Posterior vena cava (tissue), 2 donors: ENCODE measurements at regions of chr13 and their contacts with region 1.

Region 1: DNA sequence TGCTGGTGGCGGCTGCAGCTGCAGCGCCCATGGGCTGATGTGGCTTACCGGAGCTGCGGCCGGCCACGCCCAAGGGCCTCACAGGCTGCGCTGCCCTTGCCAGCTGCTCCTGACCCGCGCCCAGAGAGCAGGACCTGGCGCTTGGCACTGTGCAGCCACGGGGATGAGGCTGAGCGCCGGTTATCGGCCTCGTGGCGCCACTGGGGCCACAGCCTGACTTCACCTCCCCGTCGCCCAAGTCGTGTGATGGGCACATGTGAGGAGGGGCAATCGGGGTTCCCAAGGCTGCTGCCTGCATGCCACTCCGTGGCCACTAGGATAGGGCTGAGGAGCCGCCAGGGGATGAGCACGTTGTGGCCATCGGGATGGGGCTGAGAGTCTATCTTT is 77.2 kb upstream of the PABPC3 start:
- DNase-seq: no peak

Region 2: DNA sequence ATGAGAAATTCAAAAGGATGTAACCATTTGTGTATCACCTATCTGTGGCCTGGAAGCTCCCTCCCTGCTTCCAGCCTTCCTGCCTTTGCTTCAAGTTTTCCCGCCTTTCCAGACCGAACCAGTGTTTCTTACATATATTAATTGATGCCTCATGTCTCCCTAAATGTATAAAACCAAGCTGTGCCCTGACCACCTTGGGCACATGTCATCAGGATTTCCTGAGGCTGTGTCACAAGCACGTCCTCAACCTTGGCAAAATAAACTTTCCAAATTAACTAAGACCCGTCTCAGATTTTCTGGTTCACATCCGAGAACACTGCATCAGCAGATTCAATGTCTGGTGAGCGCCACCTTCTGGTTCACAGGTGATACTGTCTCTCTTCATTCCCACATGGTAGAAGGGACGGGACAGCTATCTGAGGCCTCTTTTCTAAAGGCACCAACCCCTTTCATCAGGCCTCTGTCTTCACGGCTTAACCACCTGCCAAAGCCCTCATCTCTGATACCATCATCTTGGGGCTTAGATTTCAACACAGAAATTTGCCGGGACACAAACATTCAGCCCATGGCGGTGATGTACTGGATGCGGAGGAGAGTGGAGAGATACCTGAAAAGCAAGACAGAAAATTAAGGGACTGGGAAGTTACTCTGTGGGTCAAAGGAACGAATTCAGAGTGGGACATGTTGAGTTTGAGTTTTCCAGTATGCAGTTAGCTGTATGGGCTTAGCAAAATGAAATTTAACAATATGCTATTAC is 18.5 kb after region 1 on chr13:
- intact Hi-C with region 1: loop called in 1 of 2 experiments (anchors 1 kb)
- DNase-seq: no peak